ENCODE measurements at regions of chr7 and their contacts with region 1.

Region 1: GRCh38 chr7:150448789-150449147 is 1.7 kb upstream of the GIMAP8 start:
- DNase-seq: peak in 1 of 2 experiments; percentile 73
- H3K4me3 ChIP-seq: no peak overlapping the region
- H3K27ac ChIP-seq: no peak overlapping the region
- H3K4me1 ChIP-seq: no peaks in the 10 kb centered on the region
- H3K27me3 ChIP-seq: peaks cover 80% of the 10 kb centered on the region
- CTCF ChIP-seq: peak; percentile 95

Region 2: DNA sequence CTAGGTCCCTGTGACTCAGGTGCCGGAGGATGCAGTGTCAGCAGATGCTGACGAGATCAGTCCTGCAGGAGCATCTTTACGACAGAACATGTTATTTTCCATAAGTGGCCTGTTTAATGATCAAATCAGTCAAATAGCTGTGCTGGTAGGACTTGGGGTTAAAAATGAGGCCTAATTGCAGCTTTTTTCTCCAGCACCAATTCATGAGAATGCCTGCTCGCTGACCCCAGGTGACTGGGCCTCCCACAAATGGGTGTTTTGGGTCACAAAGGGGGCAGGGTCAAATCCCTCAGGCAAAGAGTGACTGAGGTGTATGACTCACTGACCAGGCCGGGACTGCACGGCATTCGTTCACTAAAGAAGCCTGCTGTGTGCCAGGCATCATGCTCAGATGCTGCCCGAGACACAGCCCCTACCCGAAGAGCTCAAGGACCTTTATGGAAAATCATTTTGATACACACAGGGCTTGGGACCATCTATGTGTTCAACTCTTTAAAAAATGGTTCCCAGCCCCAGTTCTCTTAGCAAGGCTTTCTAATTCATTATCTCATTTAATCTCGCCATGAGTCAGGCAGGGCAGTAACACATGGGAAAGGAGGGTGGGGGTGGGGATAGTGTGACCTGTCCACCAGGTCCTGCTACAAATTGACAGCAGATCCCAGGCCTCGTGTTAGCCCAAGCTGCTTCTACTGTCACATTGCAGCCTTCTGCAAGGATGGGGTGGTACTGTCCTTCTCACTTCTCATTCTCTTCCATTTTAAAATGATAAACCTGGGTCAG is 48.6 kb before region 1 on chr7:
- CTCF ChIA-PET with region 1: no interaction called
- POLR2A ChIA-PET with region 1: no interaction called
- intact Hi-C with region 1: no loop called
- DNase-seq: peak; percentile 86 to 91
- H3K4me3 ChIP-seq: no peak overlapping the region
- H3K27ac ChIP-seq: peak overlapping the region; percentile 48
- H3K4me1 ChIP-seq: peaks cover 50% of the 10 kb centered on the region
- H3K27me3 ChIP-seq: no peaks in the 10 kb centered on the region
- CTCF ChIP-seq: no peak

Region 3: GRCh38 chr7:150756858-150757257 is 308.1 kb after region 1 on chr7:
- CTCF ChIA-PET with region 1: no interaction called
- POLR2A ChIA-PET with region 1: no interaction called
- intact Hi-C with region 1: loop called (anchors 5 kb)
- DNase-seq: no peak
- H3K4me3 ChIP-seq: no peak overlapping the region
- H3K27ac ChIP-seq: no peak overlapping the region
- H3K4me1 ChIP-seq: no peaks in the 10 kb centered on the region
- H3K27me3 ChIP-seq: no peaks in the 10 kb centered on the region; the same call in 1 of the 2 replicates
- CTCF ChIP-seq: peak; percentile 34; the same call in 1 of the 2 replicates

Measured in PC-9 (cell line).